ENCODE measurements at regions of chr5 and their contacts with region 1.

Region 1: DNA sequence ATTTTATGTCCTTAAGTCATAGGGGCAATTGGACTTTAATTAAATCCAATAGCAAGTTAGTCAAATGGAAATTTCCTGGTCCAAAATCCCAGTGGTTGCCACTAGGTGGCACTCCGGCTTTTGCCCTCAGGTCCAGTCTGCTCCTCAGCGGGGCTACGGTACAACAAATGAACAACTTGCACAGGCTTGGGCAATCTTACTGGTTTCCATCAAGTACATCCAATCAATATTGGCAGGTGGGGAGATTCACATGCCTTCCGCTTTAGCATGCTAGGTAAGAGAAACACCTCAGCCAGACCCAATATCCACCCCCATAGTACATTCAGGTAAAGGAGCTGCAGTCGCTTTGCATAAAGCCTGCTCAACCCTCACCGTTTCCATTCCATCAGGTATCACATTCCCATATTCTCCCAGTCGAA is 6.3 kb upstream of the MXD3 start:
- DNase-seq: peak; percentile 90
- H3K4me3 Mint-ChIP-seq: no peak overlapping the region
- H3K27ac Mint-ChIP-seq: no peak overlapping the region
- H3K4me1 Mint-ChIP-seq: peaks cover 19% of the 10 kb centered on the region
- H3K27me3 Mint-ChIP-seq: no peaks in the 10 kb centered on the region

Region 2: DNA sequence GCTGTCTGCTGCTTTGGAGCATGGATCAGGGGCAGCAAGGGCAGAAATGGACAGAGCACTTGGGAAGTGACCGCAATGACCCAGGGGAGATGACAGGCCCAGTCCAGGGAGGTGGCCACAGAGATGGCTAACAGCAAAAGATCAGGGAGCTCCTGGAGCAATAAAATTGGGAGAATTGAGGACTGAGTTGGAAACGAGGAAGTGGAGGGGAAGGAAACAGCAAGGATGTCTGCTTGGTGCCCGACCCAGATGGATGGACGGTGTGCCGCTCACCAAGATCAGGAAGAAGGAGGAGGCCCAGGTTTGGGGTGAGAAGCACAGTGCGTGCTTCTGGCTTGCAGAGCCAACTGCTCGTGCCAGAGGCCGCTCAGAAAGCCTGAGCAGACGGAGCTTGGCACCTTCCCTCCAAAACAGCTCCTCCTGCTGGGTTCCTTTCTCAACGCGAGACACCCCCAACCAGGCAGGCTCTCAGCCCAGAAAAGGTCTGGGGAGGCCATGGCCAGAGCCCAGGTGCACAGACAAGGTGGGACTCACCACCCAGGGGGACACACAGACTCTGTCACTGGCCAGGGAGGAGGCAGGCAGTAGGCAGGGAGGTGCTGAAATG is 64.6 kb after region 1 on chr5:
- CTCF ChIA-PET with region 1: interaction called, 10 read pairs
- intact Hi-C with region 1: loop called (anchors 1 kb)
- DNase-seq: peak; percentile 71
- H3K4me3 Mint-ChIP-seq: no peak overlapping the region
- H3K27ac Mint-ChIP-seq: no peak overlapping the region
- H3K4me1 Mint-ChIP-seq: peaks cover 35% of the 10 kb centered on the region
- H3K27me3 Mint-ChIP-seq: no peaks in the 10 kb centered on the region